ENCODE measurements at regions of chrX and their contacts with region 1.

Region 1: DNA sequence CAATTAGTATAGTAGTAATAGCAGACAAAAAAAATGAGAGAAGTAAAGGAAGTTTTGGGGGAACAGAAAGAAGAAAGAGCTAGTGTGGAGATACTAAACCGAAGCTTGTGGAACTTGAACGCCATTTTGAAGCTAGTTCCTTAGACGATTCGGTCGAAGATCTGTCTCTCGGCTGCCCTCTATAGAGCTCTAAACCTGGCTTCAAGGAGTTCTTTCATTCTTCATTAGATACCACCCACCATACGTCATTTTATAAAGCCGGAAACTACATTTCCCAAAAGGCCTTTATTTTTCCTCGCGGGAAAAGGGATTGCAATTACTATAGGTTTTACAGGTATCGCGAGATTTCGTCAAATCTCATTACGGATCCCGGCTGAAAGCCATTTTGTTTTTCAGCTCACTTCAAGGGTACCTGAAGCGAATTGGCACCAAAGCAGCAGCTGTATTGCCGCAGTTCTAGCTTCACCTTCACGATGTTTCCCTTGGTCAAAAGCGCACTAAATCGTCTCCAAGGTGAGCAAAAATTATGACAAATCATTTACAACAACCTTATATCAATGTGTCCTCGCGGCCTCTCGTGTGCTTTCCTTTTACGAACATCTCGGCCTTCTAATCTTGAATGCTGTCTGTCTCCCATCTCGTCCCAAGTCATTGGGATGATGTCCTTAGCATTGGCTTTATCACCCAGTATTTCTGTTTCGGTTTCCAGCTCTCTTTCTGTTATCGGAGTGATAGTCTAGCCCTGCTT is at the start of gene COX7B:
- DNase-seq: peak; percentile 59
- CTCF ChIP-seq: peak; percentile 36

Region 2: GRCh38 chrX:77910108-77910840 is 11.0 kb after region 1 on chrX and contains the start of gene ATP7A:
- CTCF ChIA-PET with region 1: interaction called, 10 read pairs
- POLR2A ChIA-PET with region 1: no interaction called
- DNase-seq: peak; percentile 85
- CTCF ChIP-seq: peak; percentile 56

Region 3: GRCh38 chrX:77962068-77962902 is 63.0 kb after region 1 on chrX:
- CTCF ChIA-PET with region 1: no interaction called
- POLR2A ChIA-PET with region 1: no interaction called
- DNase-seq: no peak
- CTCF ChIP-seq: no peak